Activated naive CD4-positive, alpha-beta T cell treated with anti-CD3 and anti-CD28 coated beads for 36 hours (primary cell): ENCODE measurements at regions of chr12 and their contacts with region 1.

Region 1: GRCh38 chr12:53696285-53696654 is 20.4 kb upstream of the ATP5MC2 start:
- DNase-seq: peak; percentile 12
- H3K4me3 Mint-ChIP-seq: no peak overlapping the region
- H3K27ac Mint-ChIP-seq: no peak overlapping the region
- H3K4me1 Mint-ChIP-seq: peaks cover 26% of the 10 kb centered on the region
- H3K27me3 Mint-ChIP-seq: peaks cover 72% of the 10 kb centered on the region

Region 2: DNA sequence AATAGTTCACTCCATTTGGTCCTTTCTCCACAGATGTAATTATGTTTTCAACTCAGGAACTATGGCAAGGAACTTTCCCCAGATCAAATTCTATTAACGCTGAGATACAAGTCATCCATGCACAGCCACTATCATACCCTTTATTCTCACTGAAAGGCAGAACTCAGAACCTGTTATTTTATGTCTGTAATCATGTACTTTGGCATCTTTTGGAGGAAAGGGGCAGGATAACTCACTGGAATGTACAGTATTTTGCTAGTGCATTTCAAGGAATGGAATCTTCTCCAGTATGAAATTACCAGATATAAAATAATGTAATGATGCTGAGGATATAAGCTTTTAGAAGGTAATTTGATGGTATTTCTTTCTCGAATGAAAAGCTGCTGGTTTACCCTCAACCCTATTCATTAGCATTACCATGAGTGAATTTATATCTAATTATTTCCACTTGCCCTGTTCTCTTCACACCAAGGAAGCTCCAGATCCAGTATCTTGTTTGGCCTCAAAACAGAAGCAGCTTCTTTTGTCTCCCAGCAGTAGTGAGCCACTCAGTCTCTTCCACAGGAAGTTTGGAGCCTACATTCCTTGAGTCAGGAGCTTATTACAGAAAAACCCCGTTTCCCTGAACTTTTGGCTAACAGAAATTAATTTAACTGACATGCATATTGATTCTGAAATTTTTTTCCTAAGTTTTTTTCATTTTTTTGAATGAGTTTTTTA is 282.6 kb before region 1 on chr12:
- CTCF ChIA-PET with region 1: no interaction called
- intact Hi-C with region 1: no loop called
- DNase-seq: no peak
- H3K4me3 Mint-ChIP-seq: no peak overlapping the region
- H3K27ac Mint-ChIP-seq: no peak overlapping the region
- H3K4me1 Mint-ChIP-seq: peaks cover 66% of the 10 kb centered on the region
- H3K27me3 Mint-ChIP-seq: no peaks in the 10 kb centered on the region

Region 3: GRCh38 chr12:53427905-53428594 is 268.2 kb before region 1 on chr12:
- CTCF ChIA-PET with region 1: no interaction called
- intact Hi-C with region 1: no loop called
- DNase-seq: peak; percentile 63
- H3K4me3 Mint-ChIP-seq: no peak overlapping the region
- H3K27ac Mint-ChIP-seq: no peak overlapping the region
- H3K4me1 Mint-ChIP-seq: peaks cover 11% of the 10 kb centered on the region
- H3K27me3 Mint-ChIP-seq: no peaks in the 10 kb centered on the region

Region 4: DNA sequence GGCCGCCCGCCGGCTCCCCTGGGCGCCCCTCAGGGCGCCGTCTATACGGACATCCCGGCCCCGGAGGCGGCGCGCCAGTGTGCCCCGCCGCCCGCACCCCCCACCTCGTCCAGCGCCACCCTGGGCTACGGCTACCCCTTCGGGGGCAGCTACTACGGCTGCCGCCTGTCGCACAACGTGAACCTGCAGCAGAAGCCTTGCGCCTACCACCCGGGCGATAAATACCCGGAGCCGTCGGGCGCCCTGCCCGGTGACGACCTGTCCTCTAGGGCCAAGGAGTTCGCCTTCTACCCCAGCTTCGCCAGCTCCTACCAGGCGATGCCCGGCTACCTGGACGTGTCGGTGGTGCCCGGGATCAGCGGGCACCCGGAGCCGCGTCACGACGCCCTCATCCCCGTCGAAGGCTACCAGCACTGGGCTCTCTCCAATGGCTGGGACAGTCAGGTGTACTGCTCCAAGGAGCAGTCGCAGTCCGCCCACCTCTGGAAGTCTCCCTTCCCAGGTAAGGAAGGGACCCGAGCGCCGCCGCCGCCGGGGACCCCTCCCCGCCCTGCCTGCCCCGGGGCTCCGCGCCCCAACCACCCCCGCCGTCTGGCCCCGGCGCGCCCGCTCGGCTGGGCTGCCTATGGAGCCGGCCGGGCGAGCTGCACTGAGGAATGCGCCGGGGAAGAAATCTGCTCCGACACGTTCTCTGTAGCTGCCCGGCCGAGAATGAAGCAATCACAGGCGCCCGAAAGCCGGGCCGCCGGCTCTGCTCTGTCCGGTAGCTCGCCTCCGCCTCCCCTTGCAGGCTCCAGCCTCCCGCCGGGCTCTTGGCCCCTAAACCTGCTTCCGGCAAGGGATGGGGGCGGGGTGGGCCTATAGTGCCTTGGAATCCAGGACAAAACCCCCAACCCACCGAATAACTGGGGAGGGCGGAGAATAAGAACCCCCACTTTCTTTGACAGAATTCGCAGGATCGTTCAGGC is 243.2 kb after region 1 on chr12:
- CTCF ChIA-PET with region 1: no interaction called
- intact Hi-C with region 1: loop called (anchors 10 kb)
- DNase-seq: no peak
- H3K4me3 Mint-ChIP-seq: no peak overlapping the region
- H3K27ac Mint-ChIP-seq: peak overlapping the region; percentile 32
- H3K4me1 Mint-ChIP-seq: peaks cover 7% of the 10 kb centered on the region
- H3K27me3 Mint-ChIP-seq: peaks cover 81% of the 10 kb centered on the region

Region 5: GRCh38 chr12:54984658-54985376 is 1288.5 kb after region 1 on chr12 and contains the start of gene TESPA1:
- CTCF ChIA-PET with region 1: no interaction called
- intact Hi-C with region 1: no loop called
- DNase-seq: peak; percentile 94
- H3K4me3 Mint-ChIP-seq: peak within 1 kb of the TSS; percentile 75
- H3K27ac Mint-ChIP-seq: peak within 1 kb of the TSS; percentile 89
- H3K4me1 Mint-ChIP-seq: peaks cover 56% of the 10 kb centered on the region
- H3K27me3 Mint-ChIP-seq: no peaks in the 10 kb centered on the region
- total RNA-seq, gene TESPA1: 43.9 to 45.1 TPM